Naive thymus-derived CD4-positive, alpha-beta T cell (primary cell): ENCODE measurements at regions of chr6 and their contacts with region 1.

Region 1: GRCh38 chr6:111804627-111805235 is 68.5 kb downstream of the FYN start:
- DNase-seq: peak in 8 of 9 donors; percentile 31 to 77 (median 56)
- ATAC-seq: peak; percentile 89
- H3K4me3 ChIP-seq: peak overlapping the region; percentile 7
- H3K4me3 Mint-ChIP-seq: peak overlapping the region; percentile 20 to 73 (median 64)
- H3K27ac ChIP-seq: peak overlapping the region; percentile 68
- H3K27ac Mint-ChIP-seq: peak overlapping the region; percentile 78 to 97 (median 92)
- H3K4me1 ChIP-seq: peaks cover 59 to 64% of the 10 kb centered on the region in 2 donors
- H3K4me1 Mint-ChIP-seq: peaks cover 54 to 96% (median 88%) of the 10 kb centered on the region in 7 donors
- H3K27me3 ChIP-seq: no peaks in the 10 kb centered on the region
- H3K27me3 Mint-ChIP-seq: no peaks in the 10 kb centered on the region

Region 2: DNA sequence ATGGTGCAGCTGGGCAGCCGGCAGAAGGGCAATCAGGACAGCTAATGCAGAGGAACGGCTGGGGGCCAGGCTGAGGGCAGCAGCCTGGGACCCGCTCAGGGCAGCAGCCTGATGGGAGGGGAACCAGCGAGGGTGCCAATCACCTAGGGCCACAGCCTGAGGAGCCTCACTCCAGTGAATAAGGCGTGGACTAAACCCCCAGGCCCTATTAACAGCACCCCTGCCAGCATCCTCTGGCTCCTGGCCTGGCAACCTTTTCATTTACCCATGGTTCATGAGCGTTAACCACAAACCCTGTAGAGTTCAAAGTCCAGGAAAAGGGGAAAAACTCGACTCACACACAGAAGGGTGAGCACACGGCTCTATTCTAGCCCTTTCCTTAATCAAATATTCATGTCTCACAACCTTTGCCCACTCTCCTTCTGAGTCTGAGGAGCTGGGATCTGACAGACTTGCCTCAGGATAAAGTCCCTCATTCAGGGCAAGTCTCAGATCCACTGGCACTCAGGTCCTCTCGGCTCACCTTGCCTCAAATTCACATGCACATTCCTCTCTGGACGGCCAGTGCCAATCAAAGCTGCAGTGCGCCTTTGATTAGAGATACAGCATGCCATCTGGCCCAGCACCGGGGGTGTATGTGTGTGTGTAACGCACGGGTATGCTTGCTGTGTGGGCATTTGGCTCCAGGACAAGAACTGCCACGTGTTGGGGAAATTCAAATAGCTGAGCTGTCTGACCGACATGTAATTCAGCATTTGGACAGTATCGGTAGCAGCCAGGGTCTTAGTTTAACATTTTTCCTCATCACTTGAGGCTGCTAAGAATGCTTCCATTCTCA is 112.2 kb before region 1 on chr6:
- CTCF ChIA-PET with region 1: no interaction called
- POLR2A ChIA-PET with region 1: no interaction called
- intact Hi-C with region 1: no loop called
- DNase-seq: peak in 1 of 9 donors; percentile 12
- ATAC-seq: peak; percentile 31
- H3K4me3 ChIP-seq: no peak overlapping the region
- H3K4me3 Mint-ChIP-seq: peak overlapping the region in 8 of 10 donors; percentile 21 to 60 (median 45)
- H3K27ac ChIP-seq: peak overlapping the region; percentile 31
- H3K27ac Mint-ChIP-seq: peak overlapping the region; percentile 48 to 89 (median 78)
- H3K4me1 ChIP-seq: peaks cover 21 to 22% of the 10 kb centered on the region in 2 donors
- H3K4me1 Mint-ChIP-seq: peaks cover 24 to 79% (median 59%) of the 10 kb centered on the region in 7 donors
- H3K27me3 ChIP-seq: no peaks in the 10 kb centered on the region
- H3K27me3 Mint-ChIP-seq: no peaks in the 10 kb centered on the region

Region 3: DNA sequence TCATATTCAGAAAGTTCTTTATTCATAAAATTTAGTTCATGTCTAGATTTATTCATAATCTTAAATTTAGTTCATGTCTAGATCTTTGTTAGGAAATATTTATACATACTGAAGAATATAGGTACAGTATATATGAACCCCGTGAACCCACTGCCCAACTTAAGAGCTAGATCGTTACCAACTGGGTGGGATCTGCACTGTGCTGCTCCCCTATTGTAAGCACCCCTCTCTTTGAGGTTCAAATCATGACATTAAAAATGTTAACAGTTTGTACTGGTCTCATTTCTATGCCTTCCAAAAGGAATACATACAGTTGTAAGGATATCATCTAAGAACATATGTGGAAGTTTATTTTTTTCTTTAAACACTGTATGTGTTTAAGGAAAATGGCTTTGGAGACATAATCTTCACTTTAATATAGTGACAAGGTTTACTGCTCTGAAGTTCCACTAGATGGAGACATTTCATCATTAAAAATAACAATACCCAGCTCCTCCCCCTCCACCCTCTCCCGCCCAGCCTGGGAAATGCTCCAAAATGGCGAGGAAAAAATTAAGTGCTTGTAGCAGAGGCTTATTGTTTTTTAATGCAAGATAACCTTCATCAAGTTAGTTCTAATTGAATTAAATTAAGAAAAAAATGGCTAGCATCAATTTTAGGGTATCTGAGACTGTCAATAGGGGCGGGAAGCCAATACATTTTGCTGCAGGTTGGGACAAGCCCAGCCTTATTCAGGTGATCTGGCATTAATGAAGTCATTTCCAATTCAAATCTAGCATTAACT is 94.9 kb before region 1 on chr6:
- CTCF ChIA-PET with region 1: interaction called, 6 read pairs
- POLR2A ChIA-PET with region 1: no interaction called
- intact Hi-C with region 1: loop called (anchors 1 to 2 kb)
- DNase-seq: peak in 8 of 9 donors; percentile 43 to 78 (median 71)
- ATAC-seq: peak; percentile 89
- H3K4me3 ChIP-seq: no peak overlapping the region
- H3K4me3 Mint-ChIP-seq: peak overlapping the region in 8 of 10 donors; percentile 2 to 67 (median 53)
- H3K27ac ChIP-seq: peak overlapping the region; percentile 59
- H3K27ac Mint-ChIP-seq: peak overlapping the region; percentile 53 to 98 (median 93)
- H3K4me1 ChIP-seq: peaks cover 32 to 43% of the 10 kb centered on the region in 2 donors
- H3K4me1 Mint-ChIP-seq: peaks cover 32 to 64% (median 56%) of the 10 kb centered on the region in 7 donors
- H3K27me3 ChIP-seq: no peaks in the 10 kb centered on the region
- H3K27me3 Mint-ChIP-seq: no peaks in the 10 kb centered on the region

Region 4: DNA sequence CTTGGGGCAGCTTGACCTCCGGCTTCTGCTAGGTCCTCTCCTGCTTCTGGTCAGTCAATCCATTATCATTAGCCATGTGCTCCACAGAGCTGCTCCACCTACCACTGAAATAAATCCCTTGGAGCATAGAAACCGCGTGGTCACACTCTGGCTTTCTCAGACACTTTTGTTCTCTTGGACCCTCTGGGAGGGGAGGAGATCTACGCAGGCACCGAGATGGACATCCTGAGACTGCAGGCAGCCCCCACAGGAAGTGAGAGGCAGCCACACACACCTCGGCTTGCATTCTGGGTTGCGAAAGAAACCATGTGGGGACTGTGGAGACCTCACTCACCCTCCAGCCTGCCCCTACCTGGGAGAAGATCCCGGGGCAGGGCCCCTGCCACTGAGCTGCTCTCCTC is 11.0 kb before region 1 on chr6:
- CTCF ChIA-PET with region 1: interaction called, 4 read pairs
- POLR2A ChIA-PET with region 1: interaction called, 3 read pairs
- intact Hi-C with region 1: loop called (anchors 1 kb)
- DNase-seq: peak in 1 of 9 donors; percentile 32
- ATAC-seq: peak; percentile 83
- H3K4me3 ChIP-seq: peak overlapping the region; percentile 63
- H3K4me3 Mint-ChIP-seq: peak overlapping the region in 9 of 10 donors; percentile 51 to 79 (median 62)
- H3K27ac ChIP-seq: peak overlapping the region; percentile 53
- H3K27ac Mint-ChIP-seq: peak overlapping the region in 8 of 9 donors; percentile 46 to 91 (median 84)
- H3K4me1 ChIP-seq: peaks cover 68% of the 10 kb centered on the region in 2 donors
- H3K4me1 Mint-ChIP-seq: peaks cover 6 to 67% (median 9%) of the 10 kb centered on the region in 7 donors
- H3K27me3 ChIP-seq: no peaks in the 10 kb centered on the region
- H3K27me3 Mint-ChIP-seq: no peaks in the 10 kb centered on the region

Region 5: GRCh38 chr6:111832833-111833418 is 28.2 kb after region 1 on chr6:
- CTCF ChIA-PET with region 1: no interaction called
- POLR2A ChIA-PET with region 1: no interaction called
- intact Hi-C with region 1: loop called (anchors 1 to 2 kb)
- DNase-seq: no peak
- ATAC-seq: no peak
- H3K4me3 ChIP-seq: peak overlapping the region; percentile 34
- H3K4me3 Mint-ChIP-seq: peak overlapping the region; percentile 1 to 80 (median 61)
- H3K27ac ChIP-seq: peak overlapping the region; percentile 24
- H3K27ac Mint-ChIP-seq: peak overlapping the region in 7 of 9 donors; percentile 46 to 91 (median 85)
- H3K4me1 ChIP-seq: peaks cover 39 to 59% of the 10 kb centered on the region in 2 donors
- H3K4me1 Mint-ChIP-seq: peaks cover 54 to 85% (median 82%) of the 10 kb centered on the region in 7 donors
- H3K27me3 ChIP-seq: no peaks in the 10 kb centered on the region
- H3K27me3 Mint-ChIP-seq: no peaks in the 10 kb centered on the region

Region 6: DNA sequence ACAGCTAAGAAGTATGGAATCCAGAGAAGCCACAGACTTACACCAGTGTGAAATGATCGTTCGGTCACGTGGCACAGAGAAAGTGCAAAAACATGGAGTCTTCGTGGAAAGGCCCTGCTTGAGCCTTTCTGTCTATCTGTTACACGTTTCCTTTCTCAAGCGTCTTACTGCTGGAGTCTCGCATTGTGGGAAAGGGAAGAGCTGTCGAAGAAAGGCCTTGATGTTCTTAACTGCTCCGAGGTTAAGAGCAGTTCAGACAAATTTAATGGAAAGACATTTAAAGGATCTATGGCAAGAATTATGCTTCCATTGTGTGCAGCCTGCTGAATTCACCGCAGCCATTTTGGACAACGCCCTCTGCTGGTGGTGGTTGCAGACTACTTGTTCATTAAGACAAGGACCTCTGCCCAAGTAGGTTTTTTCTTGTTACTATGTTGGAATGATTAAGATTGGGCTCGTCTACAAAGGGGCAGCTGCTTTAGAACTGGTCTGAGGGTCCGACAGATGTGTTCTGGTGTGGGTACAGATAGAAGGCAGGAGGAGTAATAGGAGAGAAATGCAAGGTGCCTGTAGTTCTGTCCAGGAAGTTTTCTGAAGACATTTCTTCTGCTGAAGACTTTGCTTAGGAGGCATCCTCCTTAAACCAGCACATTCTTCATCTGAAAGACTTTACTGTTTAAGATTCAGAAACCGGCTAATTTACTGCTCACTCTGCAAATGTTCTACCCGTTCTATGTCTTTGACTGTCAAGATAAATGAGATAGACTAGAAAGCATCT is 224.5 kb after region 1 on chr6:
- CTCF ChIA-PET with region 1: no interaction called
- POLR2A ChIA-PET with region 1: no interaction called
- intact Hi-C with region 1: loop called in 1 of 2 experiments (anchors 1 kb)
- DNase-seq: peak in 7 of 9 donors; percentile 22 to 58 (median 43)
- ATAC-seq: no peak
- H3K4me3 ChIP-seq: no peak overlapping the region
- H3K4me3 Mint-ChIP-seq: peak overlapping the region; percentile 49 to 83 (median 68)
- H3K27ac ChIP-seq: peak overlapping the region; percentile 90
- H3K27ac Mint-ChIP-seq: peak overlapping the region; percentile 95 to 100 (median 98)
- H3K4me1 ChIP-seq: peaks cover 34 to 74% of the 10 kb centered on the region in 2 donors
- H3K4me1 Mint-ChIP-seq: peaks cover 46 to 94% (median 84%) of the 10 kb centered on the region in 7 donors
- H3K27me3 ChIP-seq: no peaks in the 10 kb centered on the region
- H3K27me3 Mint-ChIP-seq: peaks cover 0 to 3% (median 0%) of the 10 kb centered on the region in 5 donors